Lower lobe of right lung (tissue), 2 donors: ENCODE measurements at regions of chr11 and their contacts with region 1.

Region 1: GRCh38 chr11:123020968-123021367 is 39.3 kb upstream of the BSX start:
- DNase-seq: peak; percentile 55
- ATAC-seq: peak; percentile 83 to 84
- H3K4me3 ChIP-seq: no peak overlapping the region
- H3K27ac ChIP-seq: no peak overlapping the region
- H3K4me1 ChIP-seq: peaks cover 6% of the 10 kb centered on the region
- H3K27me3 ChIP-seq: peaks cover 13% of the 10 kb centered on the region
- CTCF ChIP-seq: peak; percentile 56

Region 2: GRCh38 chr11:122863704-122864326 is 157.2 kb before region 1 on chr11:
- intact Hi-C with region 1: loop called (anchors 5 kb)
- DNase-seq: no peak
- ATAC-seq: peak; percentile 56 to 76
- H3K4me3 ChIP-seq: peak overlapping the region; percentile 32
- H3K27ac ChIP-seq: peak overlapping the region; percentile 46
- H3K4me1 ChIP-seq: no peaks in the 10 kb centered on the region
- H3K27me3 ChIP-seq: peaks cover 6% of the 10 kb centered on the region
- CTCF ChIP-seq: peak; percentile 82